Body of pancreas (tissue), 4 donors: ENCODE measurements at regions of chr6 and their contacts with region 1.

Region 1: DNA sequence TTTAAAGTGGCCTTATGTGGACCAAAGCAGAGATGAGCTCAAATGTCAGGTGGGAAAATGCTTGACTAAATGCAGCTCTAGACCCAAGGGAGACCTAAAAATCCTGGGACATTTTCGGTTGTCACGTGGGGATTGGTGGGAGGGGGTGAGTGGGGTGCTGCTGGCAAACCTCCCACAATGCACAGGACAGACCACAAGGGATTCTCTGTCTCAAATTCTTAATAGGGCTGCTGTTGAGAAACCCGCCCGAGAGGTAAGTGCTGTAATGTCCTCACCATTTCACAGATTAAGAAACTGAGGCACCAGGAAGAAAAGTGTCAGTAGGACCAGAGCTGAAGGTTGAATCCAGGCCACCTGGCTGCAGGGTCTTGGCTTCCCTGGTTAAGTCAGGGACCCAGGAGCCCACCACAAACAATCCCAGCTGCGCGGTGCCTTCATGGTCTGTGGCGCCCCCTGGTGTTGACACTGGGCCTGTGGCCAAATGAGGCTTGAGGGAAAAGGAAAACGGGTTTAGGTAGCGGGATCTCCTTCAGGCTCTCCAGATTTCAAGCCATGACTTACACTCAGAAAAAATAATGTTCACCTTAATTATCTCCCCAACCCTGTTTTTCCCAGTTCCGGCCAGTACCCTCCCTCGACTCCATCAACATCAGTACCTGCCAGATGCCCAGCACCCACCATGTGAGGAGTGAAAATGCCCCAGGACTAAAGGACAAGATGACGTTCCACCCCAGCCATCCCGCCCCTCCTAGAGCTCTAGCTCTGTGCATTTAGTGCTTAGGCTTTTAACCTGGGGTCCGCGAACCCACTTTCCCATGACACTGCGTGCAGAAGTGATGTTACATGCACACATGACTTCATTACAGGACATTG is 7.2 kb downstream of the HLA-G start:
- DNase-seq: peak; percentile 7 to 49 (median 42)
- ATAC-seq: no peak
- H3K4me3 ChIP-seq: no peak overlapping the region
- H3K27ac ChIP-seq: no peak overlapping the region
- H3K4me1 ChIP-seq: no peaks in the 10 kb centered on the region
- H3K27me3 ChIP-seq: no peaks in the 10 kb centered on the region
- CTCF ChIP-seq: peak; percentile 43 to 89 (median 66)
- POLR2A ChIP-seq: no peak

Region 2: GRCh38 chr6:29516108-29516507 is 318.7 kb before region 1 on chr6:
- intact Hi-C with region 1: no loop called
- DNase-seq: no peak
- ATAC-seq: no peak
- H3K4me3 ChIP-seq: no peak overlapping the region
- H3K27ac ChIP-seq: no peak overlapping the region
- H3K4me1 ChIP-seq: no peaks in the 10 kb centered on the region
- H3K27me3 ChIP-seq: no peaks in the 10 kb centered on the region
- CTCF ChIP-seq: no peak
- POLR2A ChIP-seq: no peak

Region 3: GRCh38 chr6:29617782-29618557 is 216.8 kb before region 1 on chr6:
- intact Hi-C with region 1: no loop called
- DNase-seq: no peak
- ATAC-seq: no peak
- H3K4me3 ChIP-seq: no peak overlapping the region
- H3K27ac ChIP-seq: no peak overlapping the region
- H3K4me1 ChIP-seq: no peaks in the 10 kb centered on the region
- H3K27me3 ChIP-seq: no peaks in the 10 kb centered on the region
- CTCF ChIP-seq: no peak
- POLR2A ChIP-seq: no peak

Region 4: DNA sequence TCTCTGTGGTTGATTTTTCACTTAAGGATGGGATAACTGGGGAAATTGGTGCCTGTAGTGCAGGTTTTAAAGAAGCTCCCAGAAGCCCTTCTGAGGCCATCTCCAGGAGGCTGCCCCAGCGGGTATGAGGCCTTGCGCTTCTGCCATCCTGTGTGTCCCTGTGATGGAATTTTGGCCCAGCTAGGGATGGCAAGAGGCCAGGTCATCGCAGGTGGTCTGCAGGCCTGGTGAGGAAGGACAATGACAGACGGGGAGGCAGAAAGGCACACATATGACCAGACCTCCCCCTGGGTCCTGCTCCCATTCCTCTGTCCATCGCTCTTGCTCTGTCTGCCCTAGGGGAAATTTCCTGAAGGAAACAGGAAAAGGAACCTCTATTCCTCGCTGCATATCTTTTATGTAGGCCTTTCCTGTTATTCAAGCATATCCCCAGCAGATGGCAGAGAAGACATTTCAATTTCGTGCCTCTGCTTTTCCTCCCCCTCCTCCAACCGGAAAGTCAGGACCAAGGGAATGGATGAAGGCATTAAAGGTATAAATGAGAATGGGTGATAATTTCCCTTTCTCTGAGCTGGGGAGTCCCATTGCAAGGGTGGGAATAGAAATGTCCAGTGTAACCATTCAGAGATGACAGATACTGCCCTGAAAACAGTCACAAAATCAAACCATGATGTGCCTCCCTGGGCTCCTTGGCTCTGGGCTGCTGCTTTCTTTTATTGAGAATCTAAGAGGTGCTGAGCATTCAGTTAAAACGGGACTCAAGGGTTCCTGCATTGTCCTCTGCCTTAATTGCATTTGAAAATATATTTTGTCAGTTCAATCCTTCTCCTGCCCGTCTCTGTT is 129.2 kb before region 1 on chr6:
- intact Hi-C with region 1: loop called (anchors 10 kb)
- DNase-seq: peak; percentile 43 to 54 (median 48)
- ATAC-seq: peak; percentile 68
- H3K4me3 ChIP-seq: no peak overlapping the region
- H3K27ac ChIP-seq: no peak overlapping the region
- H3K4me1 ChIP-seq: no peaks in the 10 kb centered on the region
- H3K27me3 ChIP-seq: no peaks in the 10 kb centered on the region
- CTCF ChIP-seq: peak in 6 of 7 experiments; percentile 22 to 81 (median 65)
- POLR2A ChIP-seq: no peak

Region 5: DNA sequence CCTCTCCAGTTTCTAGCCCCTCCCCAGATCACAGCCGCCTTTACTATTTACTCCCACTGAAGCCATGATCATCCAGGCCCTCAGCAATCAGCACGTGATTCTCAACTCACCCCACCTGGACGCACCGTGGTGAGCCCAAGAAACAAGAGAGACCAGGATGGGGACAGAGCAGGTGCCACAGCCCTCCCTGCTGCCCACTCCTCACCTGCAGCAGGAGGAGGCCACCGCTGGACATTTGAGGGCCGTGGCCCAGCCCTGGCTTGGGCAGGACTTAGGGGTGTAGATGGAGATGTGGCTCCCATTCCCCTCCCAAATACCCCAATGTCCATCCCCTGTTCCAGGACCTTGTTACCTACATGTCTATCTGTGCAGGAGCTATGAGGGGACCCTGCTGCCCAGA is 91.2 kb before region 1 on chr6:
- intact Hi-C with region 1: loop called (anchors 5 kb)
- DNase-seq: no peak
- ATAC-seq: no peak
- H3K4me3 ChIP-seq: no peak overlapping the region
- H3K27ac ChIP-seq: no peak overlapping the region
- H3K4me1 ChIP-seq: peaks cover 12% of the 10 kb centered on the region
- H3K27me3 ChIP-seq: no peaks in the 10 kb centered on the region
- CTCF ChIP-seq: no peak
- POLR2A ChIP-seq: no peak